ENCODE measurements at regions of chrX and their contacts with region 1.

Region 1: DNA sequence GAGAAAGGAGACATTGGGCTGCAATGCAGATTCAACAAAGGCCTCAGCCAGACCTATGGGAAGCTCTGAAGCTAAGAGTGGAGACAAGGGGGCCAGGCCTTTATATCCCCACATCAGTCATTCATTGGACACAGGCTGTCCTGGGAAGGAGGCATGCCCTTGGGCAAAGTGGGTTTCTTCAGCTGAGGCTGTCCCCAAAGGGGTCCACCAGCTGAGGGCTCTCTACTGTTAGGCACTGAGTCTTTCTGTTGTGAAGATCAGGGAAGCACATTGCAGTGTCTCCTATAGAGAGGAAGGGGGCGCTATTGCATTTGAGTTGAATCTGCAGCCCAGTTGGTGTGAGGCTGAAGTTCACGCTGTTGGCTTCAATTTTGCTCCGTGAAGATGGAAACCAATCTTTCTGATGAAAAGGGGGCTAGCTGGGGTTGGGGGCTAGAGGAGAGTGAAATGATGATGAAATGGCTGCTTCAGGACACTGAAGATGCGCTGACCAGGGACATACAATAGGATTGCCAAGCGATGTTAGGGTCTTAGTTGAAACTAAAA is 48.0 kb downstream of the SLC25A5 start:
- H3K4me3 ChIP-seq: no peak overlapping the region
- H3K27ac ChIP-seq: no peak overlapping the region
- H3K4me1 ChIP-seq: no peaks in the 10 kb centered on the region
- CTCF ChIP-seq: peak; percentile 84

Region 2: DNA sequence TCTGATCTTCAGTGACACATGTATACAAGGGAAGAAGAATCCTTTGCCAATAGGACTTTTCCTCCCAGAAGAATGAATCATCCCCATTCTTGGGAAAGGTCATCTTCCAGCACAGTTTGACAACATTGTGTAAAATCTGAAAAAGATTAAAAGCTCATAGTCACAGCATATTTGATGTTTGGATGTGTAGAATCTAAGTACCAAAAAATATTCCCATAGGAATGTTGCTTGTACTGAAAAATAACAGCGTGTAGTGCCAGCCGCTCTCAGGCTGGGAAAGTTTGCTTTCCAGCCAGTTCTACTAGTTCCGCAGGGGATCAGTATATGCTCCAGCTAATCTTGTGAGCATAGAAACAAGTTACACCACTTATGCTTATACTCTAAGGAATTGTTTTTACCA is 863.5 kb before region 1 on chrX:
- CTCF ChIA-PET with region 1: no interaction called
- POLR2A ChIA-PET with region 1: no interaction called
- H3K4me3 ChIP-seq: no peak overlapping the region
- H3K27ac ChIP-seq: no peak overlapping the region
- H3K4me1 ChIP-seq: no peaks in the 10 kb centered on the region
- CTCF ChIP-seq: no peak

Region 3: GRCh38 chrX:119417844-119418243 is 98.4 kb before region 1 on chrX:
- CTCF ChIA-PET with region 1: interaction called, 27 read pairs
- POLR2A ChIA-PET with region 1: no interaction called
- H3K4me3 ChIP-seq: no peak overlapping the region
- H3K27ac ChIP-seq: no peak overlapping the region
- H3K4me1 ChIP-seq: no peaks in the 10 kb centered on the region
- CTCF ChIP-seq: no peak

Region 4: GRCh38 chrX:119482481-119483480 is 33.4 kb before region 1 on chrX:
- CTCF ChIA-PET with region 1: interaction called, 44 read pairs
- POLR2A ChIA-PET with region 1: no interaction called
- H3K4me3 ChIP-seq: no peak overlapping the region; the same call in 1 of the 2 replicates
- H3K27ac ChIP-seq: no peak overlapping the region
- H3K4me1 ChIP-seq: no peaks in the 10 kb centered on the region
- CTCF ChIP-seq: peak; percentile 98

Region 5: DNA sequence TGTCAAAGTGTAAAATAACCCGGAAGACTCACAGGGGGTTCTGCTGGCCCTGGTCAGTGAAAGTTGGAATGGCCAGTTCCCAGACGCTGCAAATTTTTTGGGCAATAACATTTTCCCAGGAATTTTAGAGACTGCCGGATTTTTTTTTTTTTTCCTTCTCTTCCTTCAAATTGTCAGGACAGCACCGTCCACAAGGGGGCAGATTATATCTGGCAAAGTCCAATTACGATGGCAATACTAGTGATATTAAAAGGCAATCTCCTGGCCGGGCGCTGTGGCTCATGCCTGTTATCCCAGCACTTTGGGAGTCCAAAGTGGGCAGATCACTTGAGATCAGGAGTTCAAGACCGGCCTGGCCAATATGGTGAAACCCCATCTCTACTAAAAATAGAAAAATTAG is 27.5 kb before region 1 on chrX:
- CTCF ChIA-PET with region 1: interaction called, 44 read pairs
- POLR2A ChIA-PET with region 1: interaction called, 5 read pairs
- H3K4me3 ChIP-seq: no peak overlapping the region
- H3K27ac ChIP-seq: no peak overlapping the region
- H3K4me1 ChIP-seq: no peaks in the 10 kb centered on the region
- CTCF ChIP-seq: peak; percentile 27; the same call in 1 of the 2 replicates

Region 6: DNA sequence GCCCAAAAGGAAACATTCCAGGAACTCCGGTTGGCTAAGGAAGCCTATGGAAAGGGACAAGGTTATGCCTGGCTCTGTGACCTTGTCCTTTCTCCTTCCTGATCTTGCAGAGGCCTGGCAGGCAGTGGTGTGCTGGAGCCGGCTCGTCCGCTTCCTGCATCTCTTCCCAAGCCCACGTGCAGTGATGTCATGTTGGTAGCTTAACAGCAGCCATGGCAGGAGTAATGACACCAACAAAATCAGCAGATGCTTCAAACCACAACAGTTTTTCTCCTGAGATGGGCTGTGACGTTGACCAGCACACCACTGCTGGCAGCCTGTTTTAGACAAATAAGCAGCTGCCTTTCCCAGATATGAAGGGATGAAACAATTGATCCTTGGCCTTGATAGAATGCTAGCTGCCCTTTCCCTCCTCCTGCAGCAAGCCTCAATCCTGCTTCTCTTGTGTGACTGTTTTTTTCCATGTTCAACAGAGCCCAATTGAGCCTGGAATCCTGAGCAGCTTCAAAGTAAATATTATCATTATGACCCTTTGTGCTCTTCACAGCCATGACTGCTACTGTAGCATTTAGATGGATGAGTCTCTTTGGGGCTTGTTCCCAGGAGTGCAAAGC is 153.3 kb after region 1 on chrX:
- CTCF ChIA-PET with region 1: no interaction called
- POLR2A ChIA-PET with region 1: no interaction called
- H3K4me3 ChIP-seq: no peak overlapping the region
- H3K27ac ChIP-seq: no peak overlapping the region
- H3K4me1 ChIP-seq: peaks cover 15% of the 10 kb centered on the region
- CTCF ChIP-seq: no peak

Region 7: GRCh38 chrX:119729408-119730201 is 213.4 kb after region 1 on chrX:
- CTCF ChIA-PET with region 1: interaction called, 18 read pairs
- POLR2A ChIA-PET with region 1: no interaction called
- H3K4me3 ChIP-seq: no peak overlapping the region
- H3K27ac ChIP-seq: no peak overlapping the region
- H3K4me1 ChIP-seq: no peaks in the 10 kb centered on the region
- CTCF ChIP-seq: no peak

Region 8: GRCh38 chrX:119745283-119745848 is 229.1 kb after region 1 on chrX:
- CTCF ChIA-PET with region 1: interaction called, 10 read pairs
- POLR2A ChIA-PET with region 1: no interaction called
- H3K4me3 ChIP-seq: no peak overlapping the region
- H3K27ac ChIP-seq: no peak overlapping the region
- H3K4me1 ChIP-seq: no peaks in the 10 kb centered on the region
- CTCF ChIP-seq: no peak

Region 9: DNA sequence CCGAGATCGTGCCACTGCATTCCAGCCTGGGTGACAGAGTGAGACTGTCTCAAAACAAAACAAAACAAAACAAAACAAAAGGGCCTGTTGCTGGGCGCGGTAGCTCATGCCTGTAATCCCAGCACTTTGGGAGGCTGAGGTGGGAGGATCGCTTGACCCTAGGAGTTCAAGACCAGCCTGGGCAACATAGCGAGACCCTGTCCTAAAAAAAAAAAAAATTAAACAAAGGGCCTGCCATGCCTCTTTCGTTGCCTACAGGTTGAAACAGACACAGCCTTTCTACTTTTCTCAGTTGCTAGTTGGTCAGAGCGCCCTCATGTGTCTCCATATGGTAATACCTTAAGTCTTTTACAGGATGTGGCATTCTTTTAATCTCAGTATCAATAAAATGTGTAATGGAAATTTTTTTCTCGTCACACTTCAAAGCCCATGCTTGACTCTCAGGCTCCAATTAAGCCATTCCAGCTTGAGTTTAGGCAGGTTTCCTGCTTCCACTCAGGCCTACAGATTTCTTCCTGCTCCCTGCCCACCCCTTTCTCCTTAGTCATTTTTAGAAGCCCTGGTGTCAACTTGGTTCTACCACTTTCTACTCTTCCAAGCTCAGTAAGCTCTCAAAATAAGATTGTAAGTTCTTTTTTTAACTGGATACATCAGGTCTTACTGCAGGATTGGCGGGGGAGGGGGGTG is 237.5 kb after region 1 on chrX:
- CTCF ChIA-PET with region 1: interaction called, 14 read pairs
- POLR2A ChIA-PET with region 1: no interaction called
- H3K4me3 ChIP-seq: no peak overlapping the region
- H3K27ac ChIP-seq: no peak overlapping the region
- H3K4me1 ChIP-seq: 0 out of 2 replicates have a peak, but pooled peaks cover 2% of the 10 kb centered on the region
- CTCF ChIP-seq: peak; percentile 48

Region 10: DNA sequence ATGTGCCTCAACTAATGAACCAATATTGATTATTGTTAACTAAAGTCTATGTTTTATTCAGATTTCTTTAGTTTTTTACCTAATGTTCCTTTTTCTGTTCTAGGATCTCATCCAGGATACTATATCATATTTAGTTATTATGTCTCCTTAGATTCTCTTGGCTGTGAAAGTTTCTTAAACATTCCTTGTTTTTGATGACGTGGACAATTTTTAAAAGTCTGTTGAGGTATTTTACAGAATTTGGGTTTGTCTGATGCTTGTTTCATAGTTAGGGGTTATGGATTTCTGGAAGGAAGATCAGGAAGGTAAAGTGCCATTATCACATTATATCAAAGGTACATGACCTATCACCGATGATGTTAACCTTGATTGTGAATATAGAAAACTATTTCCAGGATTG is 1069.5 kb after region 1 on chrX:
- CTCF ChIA-PET with region 1: no interaction called
- POLR2A ChIA-PET with region 1: no interaction called
- H3K4me3 ChIP-seq: no peak overlapping the region
- H3K27ac ChIP-seq: no peak overlapping the region
- H3K4me1 ChIP-seq: no peaks in the 10 kb centered on the region
- CTCF ChIP-seq: no peak

Region 11: GRCh38 chrX:120603707-120604360 is 1087.6 kb after region 1 on chrX and contains the start of gene MCTS1:
- CTCF ChIA-PET with region 1: no interaction called
- POLR2A ChIA-PET with region 1: no interaction called
- H3K4me3 ChIP-seq: peak within 1 kb of the TSS; percentile 54
- H3K27ac ChIP-seq: peak within 1 kb of the TSS; percentile 62
- H3K4me1 ChIP-seq: no peaks in the 10 kb centered on the region; the same call in 1 of the 2 replicates
- CTCF ChIP-seq: no peak